ENCODE measurements at regions of chr1 and their contacts with region 1.

Region 1: GRCh38 chr1:32205401-32206370 is at the start of gene IQCC:
- DNase-seq: peak; percentile 77 to 89 (median 83)
- ATAC-seq: peak; percentile 77
- H3K4me3 ChIP-seq: peak within 1 kb of the TSS; percentile 81
- H3K4me3 Mint-ChIP-seq: peak within 1 kb of the TSS; percentile 80 to 91 (median 88)
- H3K27ac ChIP-seq: peak within 1 kb of the TSS; percentile 80
- H3K27ac Mint-ChIP-seq: peak within 1 kb of the TSS; percentile 42 to 95 (median 86)
- H3K4me1 ChIP-seq: peaks cover 18 to 28% of the 10 kb centered on the region in 2 donors
- H3K4me1 Mint-ChIP-seq: peaks cover 17 to 45% (median 33%) of the 10 kb centered on the region in 7 donors
- H3K27me3 ChIP-seq: no peaks in the 10 kb centered on the region
- H3K27me3 Mint-ChIP-seq: no peaks in the 10 kb centered on the region
- total RNA-seq, gene IQCC: 2.3 to 4.6 (median 2.5) TPM

Region 2: GRCh38 chr1:31644560-31645273 is 561.0 kb before region 1 on chr1 and contains the start of gene PEF1:
- CTCF ChIA-PET with region 1: no interaction called
- POLR2A ChIA-PET with region 1: no interaction called
- intact Hi-C with region 1: loop called in 1 of 2 experiments (anchors 10 kb)
- DNase-seq: peak; percentile 97 to 100 (median 99)
- ATAC-seq: peak; percentile 94
- H3K4me3 ChIP-seq: peak within 1 kb of the TSS; percentile 91
- H3K4me3 Mint-ChIP-seq: peak within 1 kb of the TSS; percentile 92 to 100 (median 98)
- H3K27ac ChIP-seq: peak within 1 kb of the TSS; percentile 98
- H3K27ac Mint-ChIP-seq: peak within 1 kb of the TSS; percentile 98 to 100 (median 99)
- H3K4me1 ChIP-seq: peaks cover 27 to 30% of the 10 kb centered on the region in 2 donors
- H3K4me1 Mint-ChIP-seq: peaks cover 18 to 47% (median 40%) of the 10 kb centered on the region in 7 donors
- H3K27me3 ChIP-seq: no peaks in the 10 kb centered on the region
- H3K27me3 Mint-ChIP-seq: no peaks in the 10 kb centered on the region
- total RNA-seq, gene PEF1: 37.7 to 49.8 (median 40.8) TPM

Region 3: GRCh38 chr1:32179443-32180185 is 26.1 kb before region 1 on chr1 and contains the start of gene TXLNA:
- CTCF ChIA-PET with region 1: interaction called, 4 read pairs
- POLR2A ChIA-PET with region 1: interaction called, 49 read pairs
- intact Hi-C with region 1: loop called (anchors 1 kb)
- DNase-seq: peak; percentile 80 to 93 (median 86)
- ATAC-seq: peak; percentile 91
- H3K4me3 ChIP-seq: peak within 1 kb of the TSS; percentile 89
- H3K4me3 Mint-ChIP-seq: peak within 1 kb of the TSS; percentile 86 to 94 (median 91)
- H3K27ac ChIP-seq: peak within 1 kb of the TSS; percentile 89
- H3K27ac Mint-ChIP-seq: peak within 1 kb of the TSS; percentile 84 to 98 (median 92)
- H3K4me1 ChIP-seq: peaks cover 17 to 21% of the 10 kb centered on the region in 2 donors
- H3K4me1 Mint-ChIP-seq: peaks cover 22 to 45% (median 38%) of the 10 kb centered on the region in 7 donors
- H3K27me3 ChIP-seq: no peaks in the 10 kb centered on the region
- H3K27me3 Mint-ChIP-seq: no peaks in the 10 kb centered on the region
- total RNA-seq, gene TXLNA: 16.7 to 83.3 (median 36.3) TPM

Region 4: DNA sequence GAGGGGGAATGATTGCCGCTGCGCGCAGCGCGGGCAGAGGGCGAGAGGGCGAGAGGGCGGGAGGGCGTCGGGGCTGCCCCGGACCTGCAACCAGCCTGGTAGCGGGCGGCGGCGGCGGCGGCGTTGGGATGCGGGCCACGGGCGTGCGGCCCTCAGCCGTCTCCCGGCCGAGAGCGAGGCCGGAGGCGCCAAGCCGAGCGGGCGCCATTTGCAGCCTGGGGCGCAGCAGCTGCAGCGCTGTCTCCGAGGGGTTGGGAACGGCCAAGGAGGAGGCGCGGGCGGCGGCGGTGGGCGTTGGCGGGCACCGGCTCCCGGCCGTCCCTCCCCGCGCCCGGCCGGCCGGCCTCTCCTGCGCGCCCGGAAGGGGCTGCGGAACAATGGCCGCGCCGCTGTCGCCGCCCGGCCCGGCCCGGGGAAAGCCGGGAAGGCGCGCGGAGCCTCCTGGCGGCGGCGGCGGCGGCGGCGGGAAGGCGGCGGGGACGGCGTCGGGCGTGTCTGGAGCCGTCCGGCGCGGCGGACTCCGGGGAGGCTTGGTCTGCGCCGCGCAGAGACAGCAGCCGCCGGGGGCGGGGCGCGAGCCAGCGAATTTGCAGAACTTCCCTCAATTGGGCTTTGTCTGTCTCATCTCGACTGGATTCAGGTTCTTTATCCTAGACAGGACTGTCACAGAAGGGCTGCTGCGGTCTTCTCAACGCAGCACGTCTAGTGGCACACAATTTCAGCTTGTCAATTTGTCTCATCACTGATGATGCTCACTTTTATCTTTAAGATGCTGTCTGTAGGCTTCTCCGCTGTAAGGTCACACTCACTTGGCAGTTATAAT is 294.9 kb after region 1 on chr1:
- CTCF ChIA-PET with region 1: no interaction called
- POLR2A ChIA-PET with region 1: no interaction called
- intact Hi-C with region 1: no loop called
- DNase-seq: peak in 3 of 9 donors; percentile 5 to 50 (median 15)
- ATAC-seq: peak; percentile 74
- H3K4me3 ChIP-seq: no peak overlapping the region
- H3K4me3 Mint-ChIP-seq: peak overlapping the region; percentile 71 to 85 (median 79)
- H3K27ac ChIP-seq: no peak overlapping the region
- H3K27ac Mint-ChIP-seq: no peak overlapping the region
- H3K4me1 ChIP-seq: no peaks in the 10 kb centered on the region
- H3K4me1 Mint-ChIP-seq: peaks cover 0 to 12% (median 3%) of the 10 kb centered on the region in 7 donors
- H3K27me3 ChIP-seq: peaks cover 0 to 3% of the 10 kb centered on the region in 2 donors
- H3K27me3 Mint-ChIP-seq: peaks cover 42 to 53% (median 45%) of the 10 kb centered on the region in 5 donors

Measured in naive thymus-derived CD4-positive, alpha-beta T cell (primary cell).